Heart right ventricle (tissue), 16 donors: ENCODE measurements at regions of chr18 and their contacts with region 1.

Region 1: DNA sequence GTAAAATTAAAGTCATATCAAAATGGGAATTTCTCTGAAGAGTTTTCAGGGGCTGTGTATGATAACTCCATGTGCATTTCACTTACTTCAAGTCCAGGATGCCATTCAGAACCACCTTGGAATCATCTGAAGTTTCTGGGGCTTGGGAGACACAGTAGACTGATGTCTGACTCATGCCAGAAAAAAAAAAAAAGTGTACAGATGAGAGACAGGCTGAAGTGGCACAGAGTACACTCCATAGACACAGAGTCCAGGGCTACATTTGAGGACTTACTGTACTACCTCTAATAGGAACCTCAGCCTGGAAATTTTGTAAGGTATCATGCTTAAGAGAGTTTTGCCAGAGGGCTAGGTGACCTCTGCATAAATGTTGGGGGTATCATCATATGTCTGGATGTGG is 92.0 kb downstream of the SS18 start:
- DNase-seq: no peak
- ATAC-seq: no peak
- H3K4me3 ChIP-seq: no peak overlapping the region
- H3K27ac ChIP-seq: no peak overlapping the region
- H3K4me1 ChIP-seq: no peaks in the 10 kb centered on the region
- H3K27me3 ChIP-seq: no peaks in the 10 kb centered on the region
- CTCF ChIP-seq: no peak

Region 2: DNA sequence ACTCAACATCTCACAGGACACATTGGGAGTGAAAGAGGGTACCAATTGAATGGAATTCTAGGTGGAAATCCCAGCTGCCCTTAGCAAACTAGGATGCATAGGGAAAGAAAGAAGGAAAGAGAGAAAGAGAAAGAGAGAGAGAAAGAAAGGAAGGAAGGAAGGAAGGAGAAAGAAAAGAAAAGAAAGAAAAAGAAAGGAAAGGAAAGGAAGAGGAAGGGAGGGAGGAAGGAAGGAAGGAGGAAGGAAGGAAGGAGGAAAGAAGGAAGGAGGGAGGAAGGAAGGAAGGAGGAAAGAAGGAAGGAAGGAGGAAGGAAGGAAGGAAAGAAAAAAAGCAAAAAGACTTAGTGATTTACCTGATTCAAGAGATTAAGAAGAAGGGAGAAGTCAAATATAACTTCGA is 51.9 kb before region 1 on chr18:
- intact Hi-C with region 1: loop called in 1 of 10 experiments (anchors 5 kb)
- DNase-seq: no peak
- ATAC-seq: no peak
- H3K4me3 ChIP-seq: no peak overlapping the region
- H3K27ac ChIP-seq: no peak overlapping the region
- H3K4me1 ChIP-seq: no peaks in the 10 kb centered on the region
- H3K27me3 ChIP-seq: no peaks in the 10 kb centered on the region
- CTCF ChIP-seq: no peak